Mammary epithelial cell (primary cell): ENCODE measurements at regions of chr9 and their contacts with region 1.

Region 1: DNA sequence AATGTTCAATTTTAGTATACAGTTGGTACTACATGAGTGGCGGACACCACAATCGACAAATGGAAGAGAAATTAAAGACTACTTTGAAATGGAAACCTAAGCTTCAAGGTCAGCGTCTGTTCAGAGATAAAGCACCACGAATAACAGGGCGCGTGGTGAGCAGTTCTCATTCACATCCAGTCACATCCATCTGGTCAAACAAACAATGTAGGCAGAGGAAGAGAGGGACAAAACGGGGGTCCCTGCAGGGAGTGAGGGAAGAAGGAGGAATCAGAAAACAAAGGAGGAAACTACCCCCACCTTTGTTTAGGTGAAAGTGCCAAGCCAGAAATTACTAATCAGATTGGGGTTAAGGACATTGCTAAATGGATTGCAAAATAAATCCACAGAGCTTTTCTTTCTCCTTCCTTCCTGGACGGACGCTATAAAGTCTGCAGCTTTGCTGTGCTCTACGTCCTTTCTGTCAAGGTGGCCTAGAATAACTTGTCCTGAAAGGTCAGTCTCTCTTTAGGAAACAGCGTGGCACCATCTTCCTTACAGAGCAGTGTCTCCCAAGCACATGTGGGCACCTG is 138.6 kb downstream of the ENTREP1 start:
- DNase-seq: no peak
- H3K4me3 ChIP-seq: no peak overlapping the region
- H3K27ac ChIP-seq: no peak overlapping the region
- H3K4me1 ChIP-seq: no peaks in the 10 kb centered on the region
- H3K27me3 ChIP-seq: no peaks in the 10 kb centered on the region
- CTCF ChIP-seq: no peak

Region 2: DNA sequence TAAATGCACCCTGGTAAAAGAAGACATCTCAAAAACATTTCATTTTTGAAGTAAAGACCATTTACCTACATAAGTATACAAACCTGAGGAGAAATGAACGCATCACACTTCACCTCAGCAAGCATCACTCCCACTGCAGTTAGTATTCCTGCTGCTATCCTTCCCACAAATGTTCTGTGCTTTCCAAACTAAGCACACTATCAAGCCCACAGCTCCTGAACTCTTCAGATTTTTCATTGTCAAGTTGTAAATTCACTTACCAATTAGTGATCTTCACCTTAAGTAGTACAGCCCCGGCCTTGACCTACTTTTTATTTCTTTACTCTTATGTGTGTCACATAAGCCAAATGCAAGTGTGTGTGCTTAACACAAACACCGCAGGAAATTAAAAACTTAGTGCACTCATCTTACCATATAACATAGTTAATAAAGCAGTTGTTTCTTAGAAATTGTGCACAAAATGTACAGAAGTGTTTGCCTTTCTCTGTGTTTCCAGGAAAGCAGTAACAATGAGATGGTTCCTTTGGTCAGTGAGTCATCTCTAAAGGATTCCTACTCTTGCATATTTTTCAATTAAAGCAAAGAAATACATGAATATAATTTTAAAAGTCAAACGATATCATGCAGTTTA is 39.2 kb after region 1 on chr9:
- CTCF ChIA-PET with region 1: no interaction called
- dilution Hi-C with region 1: no loop called
- in situ Hi-C with region 1: loop called in 1 of 2 experiments (anchors 5 kb)
- intact Hi-C with region 1: no loop called
- DNase-seq: peak; percentile 4
- H3K4me3 ChIP-seq: no peak overlapping the region
- H3K27ac ChIP-seq: no peak overlapping the region
- H3K4me1 ChIP-seq: peaks cover 11% of the 10 kb centered on the region
- H3K27me3 ChIP-seq: no peaks in the 10 kb centered on the region
- CTCF ChIP-seq: no peak

Region 3: GRCh38 chr9:69535911-69536310 is 72.3 kb after region 1 on chr9:
- CTCF ChIA-PET with region 1: no interaction called
- dilution Hi-C with region 1: loop called (anchors 5 kb)
- in situ Hi-C with region 1: no loop called
- intact Hi-C with region 1: no loop called
- DNase-seq: no peak
- H3K4me3 ChIP-seq: no peak overlapping the region
- H3K27ac ChIP-seq: no peak overlapping the region
- H3K4me1 ChIP-seq: no peaks in the 10 kb centered on the region
- H3K27me3 ChIP-seq: no peaks in the 10 kb centered on the region
- CTCF ChIP-seq: no peak